ENCODE measurements at regions of chr17 and their contacts with region 1.

Region 1: DNA sequence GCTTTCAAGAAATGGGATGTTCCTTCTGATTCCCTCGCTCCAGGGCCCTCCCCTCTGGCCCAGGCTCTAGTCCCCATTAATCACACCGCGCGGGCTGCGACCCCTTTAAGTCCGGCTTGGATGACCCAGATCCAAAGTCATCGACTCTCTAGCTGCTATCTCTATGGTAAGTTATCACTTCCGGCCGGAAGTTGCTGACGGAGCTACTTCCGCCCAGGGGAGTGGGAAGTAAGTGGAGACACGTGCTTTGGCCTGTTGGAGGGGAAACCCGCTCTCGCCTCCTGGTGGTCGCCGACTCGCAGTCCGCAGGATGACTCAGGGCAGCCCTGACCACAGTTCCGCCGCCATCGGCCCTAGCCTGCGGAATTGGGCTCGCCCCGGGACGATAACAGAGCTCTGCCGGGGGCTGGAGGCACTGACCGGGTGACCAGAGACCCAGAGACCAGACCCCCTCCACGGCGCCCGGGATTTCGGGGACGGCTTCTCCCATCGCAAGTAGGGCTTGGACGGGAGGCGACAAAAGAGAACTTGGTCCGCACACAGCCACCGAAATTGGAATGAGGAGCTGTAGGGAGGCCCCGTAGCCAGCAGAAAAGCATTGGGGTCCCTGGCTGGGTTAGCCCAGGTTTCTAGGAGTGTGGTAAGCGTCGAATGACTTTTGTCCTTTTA is 52.2 kb upstream of the SEC14L1 start:
- DNase-seq: peak; percentile 93
- ATAC-seq: peak; percentile 94
- H3K4me3 ChIP-seq: peak overlapping the region; percentile 69 to 99 (median 88)
- H3K4me3 Mint-ChIP-seq: peak overlapping the region; percentile 95
- H3K27ac ChIP-seq: peak overlapping the region; percentile 85 to 94
- H3K27ac Mint-ChIP-seq: peak overlapping the region; percentile 97
- H3K4me1 ChIP-seq: peaks cover 31 to 43% of the 10 kb centered on the region in 2 donors
- H3K4me1 Mint-ChIP-seq: peaks cover 44% of the 10 kb centered on the region
- H3K27me3 ChIP-seq: peaks cover 0 to 10% (median 0%) of the 10 kb centered on the region in 4 experiments
- H3K27me3 Mint-ChIP-seq: peaks cover 10% of the 10 kb centered on the region
- CTCF ChIP-seq: peak; percentile 75

Region 2: DNA sequence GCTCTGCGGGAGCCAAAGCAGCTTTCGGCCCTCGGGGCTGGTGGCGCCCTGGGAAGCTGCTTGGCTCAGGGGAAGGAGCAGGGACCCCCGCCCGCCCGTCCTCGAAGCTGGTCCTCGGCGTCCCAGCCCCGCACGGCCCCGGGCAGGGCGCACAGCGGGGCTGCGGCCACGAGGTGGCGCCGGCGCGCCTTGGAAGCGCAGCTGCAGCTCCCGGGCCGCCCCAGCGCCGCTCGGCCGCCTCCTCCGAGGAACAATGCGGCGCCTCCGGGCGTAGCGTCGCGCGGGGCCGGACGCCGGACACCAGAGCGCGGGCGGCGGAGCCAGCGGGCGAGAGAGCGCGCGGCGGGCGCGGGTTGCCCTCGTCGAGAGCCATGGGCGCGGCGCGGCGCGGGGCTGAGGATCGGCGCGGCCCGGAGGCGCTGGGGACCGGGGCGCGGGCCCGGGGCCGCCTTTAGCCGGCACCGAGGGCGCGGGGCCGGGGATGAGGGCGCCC is 220.4 kb before region 1 on chr17 and contains the start of gene MGAT5B:
- CTCF ChIA-PET with region 1: interaction called, 14 read pairs
- POLR2A ChIA-PET with region 1: no interaction called
- intact Hi-C with region 1: loop called (anchors 1 kb)
- DNase-seq: peak; percentile 85
- ATAC-seq: peak; percentile 92
- H3K4me3 ChIP-seq: peak within 1 kb of the TSS in 3 of 5 experiments; percentile 5 to 45 (median 20)
- H3K4me3 Mint-ChIP-seq: peak within 1 kb of the TSS; percentile 84
- H3K27ac ChIP-seq: no peak within 1 kb of the TSS
- H3K27ac Mint-ChIP-seq: peak within 1 kb of the TSS; percentile 6
- H3K4me1 ChIP-seq: peaks cover 12 to 17% of the 10 kb centered on the region in 2 donors
- H3K4me1 Mint-ChIP-seq: peaks cover 17% of the 10 kb centered on the region
- H3K27me3 ChIP-seq: peaks cover 0 to 43% (median 12%) of the 10 kb centered on the region in 4 experiments
- H3K27me3 Mint-ChIP-seq: peaks cover 38% of the 10 kb centered on the region
- CTCF ChIP-seq: peak; percentile 79
- total RNA-seq, gene MGAT5B: 37.8 and 41.4 TPM in 2 replicates

Region 3: DNA sequence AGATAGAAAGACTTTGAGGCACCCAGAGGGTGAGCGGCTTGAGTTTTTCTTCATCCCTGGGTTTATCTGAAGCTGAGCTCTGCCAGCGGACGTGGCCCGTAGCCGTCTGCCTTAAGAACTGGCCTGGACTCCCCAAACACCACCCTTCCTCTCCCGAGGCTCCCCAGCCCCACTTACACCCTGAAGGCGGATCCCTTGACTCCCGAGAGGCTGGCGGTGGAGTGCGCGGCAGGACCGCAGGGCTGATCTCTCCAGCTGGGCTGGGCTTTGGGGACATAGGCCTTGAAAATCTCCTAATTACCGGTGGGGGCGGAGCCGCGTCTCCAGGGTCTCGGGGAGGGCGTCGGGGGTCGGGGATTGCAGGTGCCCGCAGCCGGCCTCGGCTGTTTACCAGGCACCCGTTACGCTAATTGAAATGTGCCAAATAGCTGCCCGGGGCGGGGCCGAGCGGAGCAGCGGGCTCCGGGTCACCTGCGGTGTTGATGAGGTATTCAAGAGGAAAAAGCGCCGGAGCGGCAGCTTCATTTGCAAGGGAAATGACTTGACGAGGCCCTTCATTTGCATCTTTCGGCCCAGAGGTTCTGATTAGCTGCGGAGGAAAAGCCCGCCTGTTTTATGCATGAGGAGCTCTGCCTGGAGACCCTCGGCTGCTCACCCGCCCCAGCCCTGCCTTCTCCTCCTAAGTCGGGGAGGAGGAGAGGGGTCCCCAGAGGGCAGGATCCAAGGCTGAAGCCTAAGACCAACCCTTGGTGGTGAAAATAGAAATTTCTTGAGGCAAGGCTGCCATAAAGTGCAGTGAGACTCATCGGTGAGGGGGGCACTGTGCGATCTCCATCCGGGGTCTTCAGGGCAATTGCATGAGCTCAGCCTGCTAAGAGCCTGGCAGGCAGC is 119.6 kb before region 1 on chr17:
- CTCF ChIA-PET with region 1: no interaction called
- POLR2A ChIA-PET with region 1: no interaction called
- intact Hi-C with region 1: no loop called
- DNase-seq: peak; percentile 89
- ATAC-seq: peak; percentile 89
- H3K4me3 ChIP-seq: peak overlapping the region; percentile 26 to 58 (median 56)
- H3K4me3 Mint-ChIP-seq: peak overlapping the region; percentile 92
- H3K27ac ChIP-seq: peak overlapping the region; percentile 55 to 76
- H3K27ac Mint-ChIP-seq: peak overlapping the region; percentile 93
- H3K4me1 ChIP-seq: peaks cover 20 to 26% of the 10 kb centered on the region in 2 donors
- H3K4me1 Mint-ChIP-seq: peaks cover 29% of the 10 kb centered on the region
- H3K27me3 ChIP-seq: peaks cover 0 to 31% (median 13%) of the 10 kb centered on the region in 4 experiments
- H3K27me3 Mint-ChIP-seq: peaks cover 26% of the 10 kb centered on the region
- CTCF ChIP-seq: no peak

Region 4: GRCh38 chr17:77140166-77140878 is 51.7 kb after region 1 on chr17:
- CTCF ChIA-PET with region 1: interaction called, 39 read pairs
- POLR2A ChIA-PET with region 1: interaction called, 24 read pairs
- intact Hi-C with region 1: loop called (anchors 1 kb)
- DNase-seq: peak; percentile 100
- ATAC-seq: peak; percentile 87
- H3K4me3 ChIP-seq: peak overlapping the region; percentile 36 to 62 (median 51)
- H3K4me3 Mint-ChIP-seq: peak overlapping the region; percentile 63
- H3K27ac ChIP-seq: peak overlapping the region; percentile 80 to 85
- H3K27ac Mint-ChIP-seq: peak overlapping the region; percentile 97
- H3K4me1 ChIP-seq: peaks cover 38 to 58% of the 10 kb centered on the region in 2 donors
- H3K4me1 Mint-ChIP-seq: peaks cover 51% of the 10 kb centered on the region
- H3K27me3 ChIP-seq: no peaks in the 10 kb centered on the region
- H3K27me3 Mint-ChIP-seq: no peaks in the 10 kb centered on the region
- CTCF ChIP-seq: no peak

Region 5: DNA sequence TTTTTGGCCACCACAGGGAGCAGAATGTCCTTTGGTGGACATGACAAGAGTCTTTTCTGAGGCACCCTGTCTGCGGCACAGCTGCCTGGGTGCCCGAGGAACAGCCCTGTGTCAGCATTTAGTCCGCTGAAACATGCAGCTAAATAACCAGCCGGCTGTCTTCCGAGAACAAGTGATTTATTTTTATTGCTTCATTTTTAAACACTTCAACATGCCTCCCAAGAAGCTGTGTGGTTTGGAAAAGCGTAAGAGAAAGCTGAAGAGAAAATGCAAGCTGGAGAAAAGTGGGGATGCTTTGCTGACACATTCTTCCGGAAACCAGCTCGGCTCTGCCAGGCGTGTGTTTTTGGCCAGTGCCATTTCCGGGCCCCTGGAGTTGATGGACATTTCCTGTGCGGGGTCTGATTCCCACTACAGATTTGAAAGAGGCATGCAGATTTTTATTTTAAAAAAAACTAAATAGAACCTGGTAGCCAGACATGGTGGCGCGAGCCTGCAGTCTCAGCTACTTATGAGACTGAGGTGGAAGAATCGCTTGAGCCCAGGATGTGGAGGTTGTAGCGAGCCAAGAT is 146.9 kb after region 1 on chr17:
- CTCF ChIA-PET with region 1: interaction called, 11 read pairs
- POLR2A ChIA-PET with region 1: interaction called, 3 read pairs
- intact Hi-C with region 1: no loop called
- DNase-seq: no peak
- ATAC-seq: no peak
- H3K4me3 ChIP-seq: peak overlapping the region in 3 of 5 experiments; percentile 4 to 41 (median 20)
- H3K4me3 Mint-ChIP-seq: peak overlapping the region; percentile 60
- H3K27ac ChIP-seq: no peak overlapping the region
- H3K27ac Mint-ChIP-seq: no peak overlapping the region
- H3K4me1 ChIP-seq: peaks cover 9 to 20% of the 10 kb centered on the region in 2 donors
- H3K4me1 Mint-ChIP-seq: peaks cover 18% of the 10 kb centered on the region
- H3K27me3 ChIP-seq: peaks cover 0 to 16% (median 0%) of the 10 kb centered on the region in 4 experiments
- H3K27me3 Mint-ChIP-seq: peaks cover 8% of the 10 kb centered on the region
- CTCF ChIP-seq: no peak

Region 6: GRCh38 chr17:77345260-77345910 is 256.8 kb after region 1 on chr17:
- CTCF ChIA-PET with region 1: no interaction called
- POLR2A ChIA-PET with region 1: no interaction called
- intact Hi-C with region 1: no loop called
- DNase-seq: no peak
- ATAC-seq: no peak
- H3K4me3 ChIP-seq: no peak overlapping the region
- H3K4me3 Mint-ChIP-seq: no peak overlapping the region
- H3K27ac ChIP-seq: no peak overlapping the region
- H3K27ac Mint-ChIP-seq: no peak overlapping the region
- H3K4me1 ChIP-seq: peaks cover 24 to 27% of the 10 kb centered on the region in 2 donors
- H3K4me1 Mint-ChIP-seq: peaks cover 29% of the 10 kb centered on the region
- H3K27me3 ChIP-seq: no peaks in the 10 kb centered on the region
- H3K27me3 Mint-ChIP-seq: no peaks in the 10 kb centered on the region
- CTCF ChIP-seq: no peak

Region 7: GRCh38 chr17:77372444-77373298 is 284.1 kb after region 1 on chr17:
- CTCF ChIA-PET with region 1: no interaction called
- POLR2A ChIA-PET with region 1: no interaction called
- intact Hi-C with region 1: loop called (anchors 5 kb)
- DNase-seq: peak; percentile 74
- ATAC-seq: peak; percentile 64
- H3K4me3 ChIP-seq: peak overlapping the region; percentile 9 to 91 (median 79)
- H3K4me3 Mint-ChIP-seq: peak overlapping the region; percentile 74
- H3K27ac ChIP-seq: no peak overlapping the region
- H3K27ac Mint-ChIP-seq: peak overlapping the region; percentile 32
- H3K4me1 ChIP-seq: peaks cover 28 to 48% of the 10 kb centered on the region in 2 donors
- H3K4me1 Mint-ChIP-seq: peaks cover 36% of the 10 kb centered on the region
- H3K27me3 ChIP-seq: no peaks in the 10 kb centered on the region
- H3K27me3 Mint-ChIP-seq: no peaks in the 10 kb centered on the region
- CTCF ChIP-seq: no peak

Region 8: GRCh38 chr17:78840725-78841611 is 1752.4 kb after region 1 on chr17 and contains the start of gene USP36:
- CTCF ChIA-PET with region 1: no interaction called
- POLR2A ChIA-PET with region 1: no interaction called
- intact Hi-C with region 1: loop called (anchors 2 kb)
- DNase-seq: peak; percentile 100
- ATAC-seq: peak; percentile 85
- H3K4me3 ChIP-seq: peak within 1 kb of the TSS; percentile 74 to 85 (median 83)
- H3K4me3 Mint-ChIP-seq: peak within 1 kb of the TSS; percentile 91
- H3K27ac ChIP-seq: peak within 1 kb of the TSS; percentile 99 to 100
- H3K27ac Mint-ChIP-seq: peak within 1 kb of the TSS; percentile 98
- H3K4me1 ChIP-seq: peaks cover 21 to 24% of the 10 kb centered on the region in 2 donors
- H3K4me1 Mint-ChIP-seq: peaks cover 37% of the 10 kb centered on the region
- H3K27me3 ChIP-seq: no peaks in the 10 kb centered on the region
- H3K27me3 Mint-ChIP-seq: no peaks in the 10 kb centered on the region
- CTCF ChIP-seq: no peak
- total RNA-seq, gene USP36: 137 and 145 TPM in 2 replicates

Measured in B cell (primary cell).